ENCODE measurements at regions of chr22 and their contacts with region 1.

Region 1: GRCh38 chr22:45435544-45436139 is 22.1 kb downstream of the RIBC2 start:
- DNase-seq: peak; percentile 86
- CTCF ChIP-seq: peak; percentile 97

Region 2: GRCh38 chr22:45271667-45272201 is 163.9 kb before region 1 on chr22:
- in situ Hi-C with region 1: loop called (anchors 10 kb)
- DNase-seq: no peak
- CTCF ChIP-seq: no peak